Caco-2 (cell line): ENCODE measurements at regions of chr22 and their contacts with region 1.

Region 1: GRCh38 chr22:29382580-29383302 is 5.6 kb downstream of the AP1B1 start:
- DNase-seq: peak; percentile 72 to 87
- H3K4me3 ChIP-seq: 0 out of 2 replicates have a peak overlapping the region, but pooled peaks have one; percentile 1
- H3K4me3 Mint-ChIP-seq: peak overlapping the region; percentile 58
- H3K27ac Mint-ChIP-seq: peak overlapping the region; percentile 56
- H3K4me1 ChIP-seq: peaks cover 76% of the 10 kb centered on the region
- H3K4me1 Mint-ChIP-seq: peaks cover 61% of the 10 kb centered on the region
- H3K27me3 ChIP-seq: no peaks in the 10 kb centered on the region
- H3K27me3 Mint-ChIP-seq: no peaks in the 10 kb centered on the region
- CTCF ChIP-seq: no peak

Region 2: DNA sequence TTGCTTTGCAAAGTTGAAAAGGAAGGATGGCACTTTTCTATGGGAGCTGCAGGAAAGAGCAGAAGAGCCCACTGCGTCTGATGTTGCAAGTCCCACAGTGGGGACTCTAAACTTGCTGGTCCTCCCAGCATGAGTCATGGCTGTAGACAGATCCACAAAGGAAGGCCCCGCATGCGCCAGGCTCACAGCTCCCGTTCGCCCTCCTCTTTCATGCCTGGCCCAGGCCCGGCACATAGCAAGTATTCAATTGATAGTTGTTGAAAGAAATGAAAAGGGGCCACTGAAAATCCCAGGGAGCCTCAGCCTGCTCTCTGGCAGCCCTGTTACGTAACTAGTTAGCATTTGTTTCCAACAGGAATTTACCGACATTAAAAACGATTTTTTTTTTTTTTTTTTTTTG is 13.3 kb before region 1 on chr22:
- CTCF ChIA-PET with region 1: no interaction called
- POLR2A ChIA-PET with region 1: interaction called, 9 read pairs
- intact Hi-C with region 1: loop called (anchors 1 kb)
- DNase-seq: peak in 1 of 2 experiments; percentile 38
- H3K4me3 ChIP-seq: no peak overlapping the region
- H3K4me3 Mint-ChIP-seq: peak overlapping the region; percentile 56
- H3K27ac Mint-ChIP-seq: peak overlapping the region; percentile 84
- H3K4me1 ChIP-seq: peaks cover 32% of the 10 kb centered on the region
- H3K4me1 Mint-ChIP-seq: peaks cover 15% of the 10 kb centered on the region
- H3K27me3 ChIP-seq: no peaks in the 10 kb centered on the region
- H3K27me3 Mint-ChIP-seq: no peaks in the 10 kb centered on the region
- CTCF ChIP-seq: no peak